Activated T-helper 2 cell treated with anti-CD3 and anti-CD28 coated beads, Interferon-gamma antibody, Interleukin-2, Interleukin-4, amounts not matched to agents 10 μg/mL and 5 μg/mL and 100 μg/mL, durations not matched to agents 14 hours and 24 hours and 36 hours (primary cell): ENCODE measurements at regions of chr14 and their contacts with region 1.

Region 1: GRCh38 chr14:92551044-92551841 is 37.7 kb downstream of the RIN3 start:
- DNase-seq: no peak
- H3K4me3 Mint-ChIP-seq: no peak overlapping the region
- H3K27ac Mint-ChIP-seq: no peak overlapping the region
- H3K4me1 Mint-ChIP-seq: peaks cover 22% of the 10 kb centered on the region
- H3K27me3 Mint-ChIP-seq: peaks cover 33% of the 10 kb centered on the region

Region 2: DNA sequence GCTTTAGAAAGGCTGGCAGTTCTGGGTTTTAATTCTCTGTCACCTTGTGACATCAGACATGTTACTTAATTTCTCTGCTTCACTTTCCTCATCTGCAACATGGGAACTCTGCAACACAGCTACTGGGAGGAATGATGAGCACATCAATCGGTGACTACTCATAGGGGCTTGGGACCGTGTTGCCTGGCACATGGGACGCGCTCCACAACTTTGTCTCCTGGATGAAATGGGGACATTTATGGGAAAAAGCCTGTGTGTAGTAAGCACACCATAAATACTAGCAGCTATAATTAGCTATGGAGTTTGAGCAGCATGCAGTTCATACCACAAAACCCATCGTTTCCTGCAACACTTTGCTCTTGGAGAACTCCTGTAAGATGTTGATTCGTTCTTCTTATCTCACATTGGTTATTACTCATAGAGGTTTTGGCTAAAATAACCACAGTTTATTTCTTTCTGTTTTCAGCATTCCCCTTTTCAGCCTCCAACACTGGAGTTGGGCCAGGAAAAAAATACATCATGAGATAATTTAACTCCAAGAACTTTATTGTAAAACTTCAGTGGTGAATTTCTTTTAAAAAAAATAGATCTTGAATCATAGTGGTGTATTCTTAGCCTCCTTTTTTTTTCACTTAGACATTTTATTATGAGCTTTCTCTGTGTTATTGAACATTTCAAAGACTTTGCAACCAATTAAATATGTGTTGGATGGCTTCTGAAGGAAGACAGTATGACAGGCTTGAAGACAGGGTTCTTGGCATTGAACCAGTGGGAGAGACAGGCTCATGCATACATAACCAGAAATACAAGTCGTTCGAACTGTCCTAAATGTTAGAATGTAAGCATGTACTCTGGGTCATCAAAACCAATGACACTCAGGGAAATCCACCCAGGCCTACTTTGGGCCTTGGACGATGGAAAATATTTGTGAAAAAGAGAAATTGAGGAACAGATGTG is 35.0 kb after region 1 on chr14:
- intact Hi-C with region 1: loop called (anchors 5 kb)
- DNase-seq: peak; percentile 44
- H3K4me3 Mint-ChIP-seq: peak overlapping the region; percentile 49
- H3K27ac Mint-ChIP-seq: peak overlapping the region; percentile 65
- H3K4me1 Mint-ChIP-seq: peaks cover 63% of the 10 kb centered on the region
- H3K27me3 Mint-ChIP-seq: peaks cover 43% of the 10 kb centered on the region